Right ventricle myocardium inferior (tissue), 1 donor: ENCODE measurements at regions of chr19 and their contacts with region 1.

Region 1: GRCh38 chr19:50357178-50358100 is 8.0 kb downstream of the NAPSA start:
- DNase-seq: peak; percentile 87
- ATAC-seq: peak; percentile 78

Region 2: DNA sequence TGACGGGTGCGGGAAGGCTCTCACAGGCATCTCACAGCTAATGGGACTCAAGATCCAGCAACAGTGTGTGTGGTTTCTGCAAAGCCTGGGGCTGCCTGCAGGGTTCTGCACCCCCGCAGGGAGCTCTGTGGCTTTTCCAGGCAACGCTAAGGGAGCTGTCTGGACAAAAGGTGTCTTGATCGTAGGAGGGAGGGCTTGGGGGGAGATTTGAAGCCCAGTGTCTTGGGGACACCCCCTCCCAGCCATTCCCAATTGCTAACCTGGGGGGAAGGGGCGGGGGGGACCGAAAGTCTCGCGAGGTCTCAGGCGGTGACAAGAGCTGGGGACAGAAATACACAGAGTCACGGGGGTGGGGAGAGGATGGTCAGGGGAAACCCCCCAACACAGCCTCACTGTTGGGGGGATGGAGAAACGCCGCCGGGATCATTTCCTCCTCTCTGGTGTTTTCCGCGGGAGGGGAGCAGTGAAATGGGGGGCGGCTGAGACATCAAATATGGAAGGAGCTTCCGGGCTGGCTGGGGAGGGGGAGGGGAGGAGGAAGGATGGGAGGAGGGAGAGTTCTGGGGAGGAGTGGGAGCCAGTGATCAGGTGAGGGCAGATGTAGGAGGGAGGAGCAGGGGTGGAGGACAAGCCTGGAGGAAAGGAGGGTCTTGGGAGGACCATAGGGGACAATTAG is 41.5 kb before region 1 on chr19:
- intact Hi-C with region 1: no loop called
- DNase-seq: no peak
- ATAC-seq: no peak

Region 3: GRCh38 chr19:50384685-50385535 is 27.5 kb after region 1 on chr19:
- intact Hi-C with region 1: no loop called
- DNase-seq: no peak
- ATAC-seq: no peak

Region 4: GRCh38 chr19:50401605-50402450 is 44.4 kb after region 1 on chr19:
- intact Hi-C with region 1: no loop called
- DNase-seq: no peak
- ATAC-seq: peak; percentile 8

Region 5: GRCh38 chr19:50461066-50461875 is 103.8 kb after region 1 on chr19:
- intact Hi-C with region 1: loop called (anchors 1 kb)
- DNase-seq: no peak
- ATAC-seq: peak; percentile 80

Region 6: GRCh38 chr19:50777754-50778303 is 420.4 kb after region 1 on chr19:
- intact Hi-C with region 1: loop called (anchors 5 kb)
- DNase-seq: no peak
- ATAC-seq: no peak